ENCODE measurements at regions of chr6 and their contacts with region 1.

Region 1: GRCh38 chr6:25490018-25490801 is 161.8 kb upstream of the SCGN start:
- DNase-seq: peak; percentile 29
- H3K4me3 ChIP-seq: no peak overlapping the region
- H3K27me3 ChIP-seq: no peaks in the 10 kb centered on the region
- CTCF ChIP-seq: peak; percentile 92

Region 2: GRCh38 chr6:25270559-25270958 is 219.7 kb before region 1 on chr6:
- CTCF ChIA-PET with region 1: interaction called, 116 read pairs
- POLR2A ChIA-PET with region 1: no interaction called
- DNase-seq: no peak
- H3K4me3 ChIP-seq: no peak overlapping the region
- H3K27me3 ChIP-seq: no peaks in the 10 kb centered on the region
- CTCF ChIP-seq: no peak

Measured in BJ (cell line).